Naive thymus-derived CD4-positive, alpha-beta T cell (primary cell): ENCODE measurements at regions of chr2 and their contacts with region 1.

Region 1: GRCh38 chr2:183038341-183039300 is at the start of gene NCKAP1:
- DNase-seq: peak; percentile 67 to 94 (median 80)
- ATAC-seq: peak; percentile 92
- H3K4me3 ChIP-seq: peak within 1 kb of the TSS; percentile 77
- H3K4me3 Mint-ChIP-seq: peak within 1 kb of the TSS; percentile 84 to 95 (median 86)
- H3K27ac ChIP-seq: no peak within 1 kb of the TSS
- H3K27ac Mint-ChIP-seq: peak within 1 kb of the TSS in 7 of 9 donors; percentile 55 to 85 (median 69)
- H3K4me1 ChIP-seq: peaks cover 26% of the 10 kb centered on the region in 2 donors
- H3K4me1 Mint-ChIP-seq: peaks cover 24 to 37% (median 34%) of the 10 kb centered on the region in 7 donors
- H3K27me3 ChIP-seq: peaks cover 3 to 28% of the 10 kb centered on the region in 2 donors
- H3K27me3 Mint-ChIP-seq: peaks cover 42 to 80% (median 63%) of the 10 kb centered on the region in 5 donors
- total RNA-seq, gene NCKAP1: 2.4 to 4.1 (median 2.7) TPM

Region 2: GRCh38 chr2:181289698-181290097 is 1748.9 kb before region 1 on chr2:
- CTCF ChIA-PET with region 1: no interaction called
- POLR2A ChIA-PET with region 1: no interaction called
- intact Hi-C with region 1: no loop called
- DNase-seq: no peak
- ATAC-seq: no peak
- H3K4me3 ChIP-seq: no peak overlapping the region
- H3K4me3 Mint-ChIP-seq: no peak overlapping the region
- H3K27ac ChIP-seq: no peak overlapping the region
- H3K27ac Mint-ChIP-seq: peak overlapping the region in 3 of 9 donors; percentile 2 to 35 (median 31)
- H3K4me1 ChIP-seq: no peaks in the 10 kb centered on the region
- H3K4me1 Mint-ChIP-seq: peaks cover 5 to 45% (median 21%) of the 10 kb centered on the region in 7 donors
- H3K27me3 ChIP-seq: no peaks in the 10 kb centered on the region
- H3K27me3 Mint-ChIP-seq: no peaks in the 10 kb centered on the region

Region 3: DNA sequence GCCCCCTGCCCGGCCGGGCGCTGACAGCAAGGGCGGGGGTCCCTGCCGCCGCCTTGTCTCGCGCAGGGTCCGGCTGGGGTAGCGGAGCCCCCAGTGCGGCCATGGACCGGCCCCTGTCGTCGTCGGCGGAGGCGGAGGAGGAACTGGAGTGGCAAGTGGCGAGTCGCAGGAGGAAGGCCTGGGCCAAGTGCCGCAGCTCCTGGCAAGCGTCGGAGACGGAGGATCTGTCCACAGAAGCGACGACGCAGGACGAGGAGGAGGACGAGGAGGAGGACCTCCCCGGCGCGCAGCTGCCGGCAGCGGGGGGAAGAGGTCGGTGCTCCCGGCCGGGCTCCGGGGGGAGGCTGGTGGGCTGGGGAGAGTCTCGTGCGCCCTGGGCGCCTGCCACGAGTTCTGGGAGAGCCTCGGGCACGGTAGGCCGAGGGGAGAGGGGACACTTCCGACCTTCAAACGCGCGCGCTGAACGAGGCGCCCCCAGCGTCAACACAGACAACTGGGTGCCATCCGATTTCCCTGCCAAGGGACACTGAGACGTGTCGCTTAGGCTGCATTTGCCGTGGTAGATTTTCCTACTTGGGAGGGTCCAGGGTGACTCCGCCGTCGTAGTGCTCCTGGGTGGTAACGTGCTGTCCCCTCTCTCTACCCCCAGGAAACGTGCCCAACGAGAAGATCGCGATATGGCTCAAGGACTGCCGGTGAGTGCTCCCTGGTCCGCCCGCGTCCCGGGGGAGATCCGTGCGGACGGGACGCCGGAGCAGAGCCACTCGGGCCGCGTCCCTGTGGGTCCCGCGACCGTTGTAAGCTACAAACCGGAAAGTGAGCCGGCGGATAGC is 1146.4 kb before region 1 on chr2:
- CTCF ChIA-PET with region 1: no interaction called
- POLR2A ChIA-PET with region 1: no interaction called
- intact Hi-C with region 1: loop called (anchors 5 to 10 kb)
- DNase-seq: peak; percentile 37 to 68 (median 65)
- ATAC-seq: peak; percentile 66
- H3K4me3 ChIP-seq: peak overlapping the region; percentile 85
- H3K4me3 Mint-ChIP-seq: peak overlapping the region; percentile 90 to 99 (median 97)
- H3K27ac ChIP-seq: peak overlapping the region; percentile 76
- H3K27ac Mint-ChIP-seq: peak overlapping the region; percentile 74 to 93 (median 89)
- H3K4me1 ChIP-seq: peaks cover 4 to 22% of the 10 kb centered on the region in 2 donors
- H3K4me1 Mint-ChIP-seq: peaks cover 25 to 49% (median 44%) of the 10 kb centered on the region in 7 donors
- H3K27me3 ChIP-seq: no peaks in the 10 kb centered on the region
- H3K27me3 Mint-ChIP-seq: peaks cover 11 to 35% (median 20%) of the 10 kb centered on the region in 5 donors

Region 4: DNA sequence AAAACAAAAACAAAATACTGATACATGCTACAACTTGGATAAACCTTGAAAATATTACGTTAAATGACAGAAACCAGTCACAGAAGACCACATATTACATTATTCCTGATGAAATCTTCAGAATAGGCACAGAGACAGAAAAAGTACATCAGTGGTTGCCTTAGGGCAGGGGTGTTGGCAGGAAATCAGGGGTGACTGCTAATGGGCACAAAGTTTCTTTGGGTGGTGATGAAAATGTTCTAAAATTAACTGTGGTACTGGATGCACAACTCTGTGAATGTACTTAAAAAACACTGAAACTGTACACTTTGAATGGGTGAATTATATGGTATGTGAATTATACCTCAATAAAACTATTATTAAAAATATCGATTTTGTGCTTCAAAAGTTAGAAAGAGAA is 17.0 kb before region 1 on chr2:
- CTCF ChIA-PET with region 1: no interaction called
- POLR2A ChIA-PET with region 1: no interaction called
- intact Hi-C with region 1: no loop called
- DNase-seq: no peak
- ATAC-seq: no peak
- H3K4me3 ChIP-seq: no peak overlapping the region
- H3K4me3 Mint-ChIP-seq: no peak overlapping the region
- H3K27ac ChIP-seq: no peak overlapping the region
- H3K27ac Mint-ChIP-seq: no peak overlapping the region
- H3K4me1 ChIP-seq: no peaks in the 10 kb centered on the region
- H3K4me1 Mint-ChIP-seq: no peaks in the 10 kb centered on the region
- H3K27me3 ChIP-seq: no peaks in the 10 kb centered on the region
- H3K27me3 Mint-ChIP-seq: peaks cover 0 to 19% (median 9%) of the 10 kb centered on the region in 5 donors

Region 5: GRCh38 chr2:183057333-183057985 is 18.8 kb after region 1 on chr2:
- CTCF ChIA-PET with region 1: no interaction called
- POLR2A ChIA-PET with region 1: no interaction called
- intact Hi-C with region 1: no loop called
- DNase-seq: no peak
- ATAC-seq: no peak
- H3K4me3 ChIP-seq: no peak overlapping the region
- H3K4me3 Mint-ChIP-seq: no peak overlapping the region
- H3K27ac ChIP-seq: no peak overlapping the region
- H3K27ac Mint-ChIP-seq: no peak overlapping the region
- H3K4me1 ChIP-seq: no peaks in the 10 kb centered on the region
- H3K4me1 Mint-ChIP-seq: no peaks in the 10 kb centered on the region
- H3K27me3 ChIP-seq: no peaks in the 10 kb centered on the region
- H3K27me3 Mint-ChIP-seq: peaks cover 17 to 33% (median 25%) of the 10 kb centered on the region in 5 donors

Region 6: DNA sequence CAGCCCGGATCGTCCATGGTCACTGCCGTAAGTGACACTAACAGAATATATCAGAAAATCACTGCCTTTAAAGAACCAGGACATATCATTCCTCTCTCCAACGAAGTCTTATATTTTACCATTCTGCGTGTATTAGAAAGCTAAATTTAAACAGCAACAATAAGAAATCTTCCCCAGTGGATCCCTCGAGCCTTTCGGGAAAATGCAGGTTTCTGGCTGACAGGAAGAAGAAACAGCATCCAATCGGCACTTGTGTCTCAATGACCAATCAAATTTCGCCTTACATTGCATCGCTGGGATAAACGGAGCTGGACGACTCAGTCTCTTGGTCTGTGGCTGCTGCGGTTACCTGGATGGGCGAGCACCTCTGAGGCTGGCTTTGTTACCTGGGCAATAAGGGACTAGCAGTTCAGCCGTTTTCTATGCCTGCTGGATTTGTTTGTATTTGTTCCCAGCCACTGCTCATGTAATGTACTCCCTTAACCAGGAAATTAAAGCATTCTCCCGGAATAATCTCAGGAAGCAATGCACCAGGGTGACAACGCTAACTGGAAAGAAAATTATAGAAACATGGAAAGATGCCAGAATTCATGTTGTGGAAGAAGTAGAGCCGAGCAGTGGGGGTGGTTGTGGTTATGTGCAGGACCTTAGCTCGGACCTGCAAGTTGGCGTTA is 40.0 kb after region 1 on chr2 and contains the start of gene DUSP19:
- CTCF ChIA-PET with region 1: no interaction called
- POLR2A ChIA-PET with region 1: interaction called, 4 read pairs
- intact Hi-C with region 1: loop called (anchors 1 kb)
- DNase-seq: peak; percentile 55 to 84 (median 75)
- ATAC-seq: peak; percentile 83
- H3K4me3 ChIP-seq: peak within 1 kb of the TSS; percentile 82
- H3K4me3 Mint-ChIP-seq: peak within 1 kb of the TSS; percentile 90 to 98 (median 97)
- H3K27ac ChIP-seq: peak within 1 kb of the TSS; percentile 63
- H3K27ac Mint-ChIP-seq: peak within 1 kb of the TSS; percentile 48 to 92 (median 76)
- H3K4me1 ChIP-seq: no peaks in the 10 kb centered on the region
- H3K4me1 Mint-ChIP-seq: peaks cover 5 to 17% (median 8%) of the 10 kb centered on the region in 7 donors
- H3K27me3 ChIP-seq: no peaks in the 10 kb centered on the region
- H3K27me3 Mint-ChIP-seq: peaks cover 0 to 13% (median 0%) of the 10 kb centered on the region in 5 donors
- total RNA-seq, gene DUSP19: 0.92 to 3.3 (median 1.2) TPM

Region 7: GRCh38 chr2:183474907-183475675 is 436.5 kb after region 1 on chr2:
- CTCF ChIA-PET with region 1: no interaction called
- POLR2A ChIA-PET with region 1: no interaction called
- intact Hi-C with region 1: no loop called
- DNase-seq: no peak
- ATAC-seq: no peak
- H3K4me3 ChIP-seq: no peak overlapping the region
- H3K4me3 Mint-ChIP-seq: no peak overlapping the region
- H3K27ac ChIP-seq: no peak overlapping the region
- H3K27ac Mint-ChIP-seq: no peak overlapping the region
- H3K4me1 ChIP-seq: no peaks in the 10 kb centered on the region
- H3K4me1 Mint-ChIP-seq: no peaks in the 10 kb centered on the region
- H3K27me3 ChIP-seq: no peaks in the 10 kb centered on the region
- H3K27me3 Mint-ChIP-seq: no peaks in the 10 kb centered on the region